ENCODE measurements at regions of chr11 and their contacts with region 1.

Region 1: GRCh38 chr11:2825889-2826678 is 59.5 kb downstream of the CDKN1C start:
- DNase-seq: peak; percentile 95
- ATAC-seq: peak; percentile 87
- H3K4me3 ChIP-seq: no peak overlapping the region
- H3K27ac ChIP-seq: peak overlapping the region; percentile 92
- H3K4me1 ChIP-seq: peaks cover 23% of the 10 kb centered on the region
- H3K27me3 ChIP-seq: no peaks in the 10 kb centered on the region
- CTCF ChIP-seq: no peak
- POLR2A ChIP-seq: no peak
- RAD21 ChIP-seq: no peak; the same call in none of the 2 replicates

Region 2: GRCh38 chr11:2699531-2700414 is 126.3 kb before region 1 on chr11 and contains the start of gene KCNQ1OT1:
- CTCF ChIA-PET with region 1: no interaction called
- POLR2A ChIA-PET with region 1: no interaction called
- dilution Hi-C with region 1: no loop called
- in situ Hi-C with region 1: no loop called
- intact Hi-C with region 1: loop called (anchors 1 kb)
- DNase-seq: peak; percentile 92
- ATAC-seq: peak; percentile 95
- H3K4me3 ChIP-seq: peak within 1 kb of the TSS; percentile 71
- H3K27ac ChIP-seq: peak within 1 kb of the TSS; percentile 83
- H3K4me1 ChIP-seq: peaks cover 5% of the 10 kb centered on the region
- H3K27me3 ChIP-seq: peaks cover 4% of the 10 kb centered on the region; the same call in 1 of the 2 replicates
- CTCF ChIP-seq: no peak
- POLR2A ChIP-seq: peak; percentile 99
- RAD21 ChIP-seq: no peak
- total RNA-seq, gene KCNQ1OT1: 1.9 and 2.0 TPM in 2 replicates

Region 3: DNA sequence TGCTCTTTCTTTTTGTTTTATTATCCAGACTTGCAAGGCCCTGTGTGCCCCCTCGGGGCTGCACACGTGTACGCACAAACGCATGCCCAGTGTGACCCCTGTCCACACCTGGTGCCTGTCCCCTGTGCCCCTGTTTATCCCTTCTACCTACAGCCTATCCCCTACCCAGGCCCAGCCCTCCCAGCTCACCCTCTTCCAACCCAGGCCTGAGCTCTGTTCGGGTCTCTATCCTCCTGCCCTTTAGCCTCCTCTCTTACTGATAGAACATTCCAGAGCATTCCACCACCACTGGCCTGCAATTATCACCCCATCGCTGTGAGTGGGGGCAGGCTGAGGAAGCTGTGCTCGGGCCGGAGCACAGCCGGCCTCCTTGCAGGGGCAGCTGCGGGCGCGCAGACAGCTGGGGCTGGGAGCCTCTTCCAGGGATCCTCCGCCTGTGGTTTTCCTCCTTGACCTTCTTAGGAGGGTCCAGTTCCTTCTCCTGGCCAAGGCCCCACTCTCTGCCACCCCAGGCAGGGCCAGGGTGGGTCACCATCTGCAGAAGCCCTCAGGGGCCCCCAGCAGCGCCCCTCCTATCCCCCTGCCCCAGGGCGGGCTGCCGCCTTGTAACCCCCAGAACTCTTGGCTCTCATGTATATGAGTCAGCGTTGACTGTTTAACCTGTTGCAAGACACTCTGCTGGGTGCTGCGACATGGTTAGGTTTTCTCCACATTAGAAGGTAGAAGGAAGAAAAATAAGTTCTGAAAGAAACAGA is 84.5 kb before region 1 on chr11:
- CTCF ChIA-PET with region 1: no interaction called
- POLR2A ChIA-PET with region 1: no interaction called
- dilution Hi-C with region 1: no loop called
- in situ Hi-C with region 1: no loop called
- intact Hi-C with region 1: loop called (anchors 5 kb)
- DNase-seq: peak; percentile 74
- ATAC-seq: peak; percentile 95
- H3K4me3 ChIP-seq: no peak overlapping the region
- H3K27ac ChIP-seq: peak overlapping the region; percentile 74; the same call in 1 of the 2 replicates
- H3K4me1 ChIP-seq: peaks cover 19% of the 10 kb centered on the region
- H3K27me3 ChIP-seq: peaks cover 2% of the 10 kb centered on the region; the same call in 1 of the 2 replicates
- CTCF ChIP-seq: no peak
- POLR2A ChIP-seq: no peak
- RAD21 ChIP-seq: no peak

Region 4: DNA sequence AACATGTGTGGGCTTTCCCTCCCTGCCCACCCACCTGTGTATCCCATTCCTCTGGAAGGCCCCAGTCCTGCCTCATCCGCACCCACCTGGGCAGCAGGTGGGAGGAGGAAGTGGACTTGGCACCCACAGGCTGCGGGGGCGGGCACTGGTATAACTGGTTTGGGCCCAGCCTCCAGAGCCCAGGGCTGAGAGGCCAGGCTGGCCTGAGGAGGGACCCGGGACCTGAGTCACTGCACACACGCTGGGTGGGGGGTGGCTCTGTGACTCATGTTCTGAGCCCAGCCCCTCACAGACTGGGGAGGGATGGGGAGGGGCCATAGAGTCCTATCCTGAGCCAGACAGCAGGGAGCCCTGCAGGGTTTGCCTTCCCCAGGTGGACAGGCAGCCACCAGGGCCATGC is 86.4 kb after region 1 on chr11:
- CTCF ChIA-PET with region 1: no interaction called
- POLR2A ChIA-PET with region 1: no interaction called
- dilution Hi-C with region 1: no loop called
- in situ Hi-C with region 1: no loop called
- intact Hi-C with region 1: no loop called
- DNase-seq: peak; percentile 85
- ATAC-seq: peak; percentile 95
- H3K4me3 ChIP-seq: no peak overlapping the region
- H3K27ac ChIP-seq: peak overlapping the region; percentile 30; the same call in 1 of the 2 replicates
- H3K4me1 ChIP-seq: peaks cover 16% of the 10 kb centered on the region
- H3K27me3 ChIP-seq: no peaks in the 10 kb centered on the region
- CTCF ChIP-seq: no peak
- POLR2A ChIP-seq: no peak
- RAD21 ChIP-seq: 0 out of 2 replicates have a peak, but pooled peaks have one; percentile 5

Measured in IMR-90 (cell line).